Stomach (tissue), 19 donors: ENCODE measurements at regions of chr15 and their contacts with region 1.

Region 1: GRCh38 chr15:32994810-32995424 is 199.6 kb downstream of the FMN1 start:
- DNase-seq: peak in 1 of 2 donors; percentile 70
- H3K4me3 ChIP-seq: no peak overlapping the region
- H3K27ac ChIP-seq: no peak overlapping the region
- H3K4me1 ChIP-seq: peaks cover 0 to 18% (median 3%) of the 10 kb centered on the region in 4 donors
- H3K27me3 ChIP-seq: no peaks in the 10 kb centered on the region
- CTCF ChIP-seq: peak in 5 of 7 experiments; percentile 27 to 61 (median 55)
- EP300 ChIP-seq: no peak
- POLR2A ChIP-seq: no peak

Region 2: GRCh38 chr15:32659340-32660155 is 335.4 kb before region 1 on chr15:
- intact Hi-C with region 1: loop called (anchors 10 kb)
- DNase-seq: no peak
- H3K4me3 ChIP-seq: no peak overlapping the region
- H3K27ac ChIP-seq: peak overlapping the region in 1 of 5 donors; percentile 10
- H3K4me1 ChIP-seq: peaks cover 0 to 25% (median 6%) of the 10 kb centered on the region in 4 donors
- H3K27me3 ChIP-seq: no peaks in the 10 kb centered on the region
- CTCF ChIP-seq: no peak
- EP300 ChIP-seq: no peak
- POLR2A ChIP-seq: no peak

Region 3: DNA sequence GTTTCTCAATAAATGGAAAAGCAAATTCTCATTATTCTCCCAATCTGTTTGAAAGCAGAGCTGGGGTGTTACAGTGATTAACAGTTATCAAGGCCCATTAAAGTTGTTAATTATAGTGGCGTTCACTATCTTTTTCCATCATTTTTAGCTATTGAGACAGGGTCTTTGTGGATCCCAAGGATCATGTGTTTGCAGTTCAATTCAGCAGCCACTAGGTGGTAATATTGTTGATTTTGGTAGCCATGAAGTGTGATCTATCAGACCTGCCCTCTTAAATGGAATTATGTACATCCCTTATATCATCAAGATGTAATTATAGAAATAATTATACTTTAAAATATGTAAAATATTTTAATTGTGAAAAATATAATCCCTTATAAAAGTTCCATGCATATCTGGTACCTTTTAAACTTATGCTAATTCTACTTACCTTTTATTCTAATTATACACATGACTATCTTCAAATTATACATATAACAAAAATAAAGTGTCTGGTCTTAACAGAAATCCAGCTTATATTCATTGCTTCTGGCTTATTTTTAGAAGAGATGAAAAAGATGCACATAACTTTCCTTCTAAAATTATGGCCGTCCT is 150.7 kb before region 1 on chr15:
- intact Hi-C with region 1: loop called (anchors 10 kb)
- DNase-seq: no peak
- H3K4me3 ChIP-seq: no peak overlapping the region
- H3K27ac ChIP-seq: no peak overlapping the region
- H3K4me1 ChIP-seq: no peaks in the 10 kb centered on the region
- H3K27me3 ChIP-seq: no peaks in the 10 kb centered on the region
- CTCF ChIP-seq: peak in 4 of 7 experiments; percentile 24 to 61 (median 52)
- EP300 ChIP-seq: no peak
- POLR2A ChIP-seq: no peak

Region 4: DNA sequence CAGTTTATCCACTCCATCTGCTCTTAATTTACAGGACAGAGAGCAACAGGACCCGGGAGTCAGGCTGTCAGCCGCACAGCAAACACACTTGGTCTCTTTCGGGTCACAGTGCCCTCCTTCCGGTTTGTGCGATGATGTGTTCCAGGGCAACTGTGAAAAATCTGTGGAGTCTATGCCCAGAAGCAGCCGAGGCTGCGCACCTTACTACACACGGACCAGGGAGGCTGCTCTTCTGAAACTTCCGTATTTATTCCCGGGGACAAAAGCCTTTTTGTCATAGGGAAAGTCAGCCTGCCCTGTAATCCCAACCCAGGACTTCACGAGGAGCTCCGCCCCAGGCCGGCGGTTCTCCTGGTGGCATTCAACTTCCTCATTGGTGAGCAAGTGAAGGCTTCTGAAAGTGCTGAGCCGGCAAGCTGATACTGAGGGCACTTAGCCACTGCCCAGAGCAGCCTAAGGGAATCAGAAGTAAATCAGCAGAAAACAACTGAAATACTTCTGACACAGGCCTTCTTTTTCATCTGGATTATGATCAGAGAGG is 73.1 kb after region 1 on chr15:
- intact Hi-C with region 1: no loop called
- DNase-seq: peak; percentile 85 to 87
- H3K4me3 ChIP-seq: peak overlapping the region; percentile 31 to 48 (median 36)
- H3K27ac ChIP-seq: peak overlapping the region; percentile 61 to 88 (median 82)
- H3K4me1 ChIP-seq: peaks cover 0 to 53% (median 38%) of the 10 kb centered on the region in 4 donors
- H3K27me3 ChIP-seq: no peaks in the 10 kb centered on the region
- CTCF ChIP-seq: no peak
- EP300 ChIP-seq: no peak
- POLR2A ChIP-seq: no peak